HepG2 (cell line): ENCODE measurements at regions of chr2 and their contacts with region 1.

Region 1: GRCh38 chr2:110157153-110157793 is 41.7 kb upstream of the MALL start:
- DNase-seq: peak; percentile 65
- ATAC-seq: peak; percentile 86
- H3K4me3 ChIP-seq: no peak overlapping the region
- H3K27ac ChIP-seq: no peak overlapping the region
- H3K4me1 ChIP-seq: no peaks in the 10 kb centered on the region
- H3K27me3 ChIP-seq: no peaks in the 10 kb centered on the region; a peak in 2 of 5 replicates
- CTCF ChIP-seq: peak; percentile 90
- EP300 ChIP-seq: no peak
- POLR2A ChIP-seq: no peak
- RAD21 ChIP-seq: peak; percentile 83

Region 2: GRCh38 chr2:110113961-110114591 is 43.2 kb before region 1 on chr2:
- CTCF ChIA-PET with region 1: interaction called, 12 read pairs
- POLR2A ChIA-PET with region 1: no interaction called
- in situ Hi-C with region 1: no loop called
- intact Hi-C with region 1: loop called (anchors 1 kb)
- DNase-seq: peak; percentile 47
- ATAC-seq: peak; percentile 88
- H3K4me3 ChIP-seq: peak overlapping the region in 1 of 3 experiments; percentile 50; a peak in 3 of 6 replicates
- H3K27ac ChIP-seq: no peak overlapping the region
- H3K4me1 ChIP-seq: peaks cover 27% of the 10 kb centered on the region
- H3K27me3 ChIP-seq: no peaks in the 10 kb centered on the region
- CTCF ChIP-seq: peak; percentile 81
- EP300 ChIP-seq: no peak
- POLR2A ChIP-seq: no peak
- RAD21 ChIP-seq: peak; percentile 63; the same call in 1 of the 2 replicates